ENCODE measurements at regions of chr3 and their contacts with region 1.

Region 1: GRCh38 chr3:59424268-59425010 is 374.6 kb upstream of the CFAP20DC start:
- DNase-seq: peak in 5 of 9 donors; percentile 20 to 72 (median 50)
- ATAC-seq: peak; percentile 76
- H3K4me3 ChIP-seq: no peak overlapping the region
- H3K4me3 Mint-ChIP-seq: peak overlapping the region; percentile 25 to 63 (median 34)
- H3K27ac ChIP-seq: no peak overlapping the region
- H3K27ac Mint-ChIP-seq: peak overlapping the region; percentile 44 to 92 (median 76)
- H3K4me1 ChIP-seq: peaks cover 46 to 50% of the 10 kb centered on the region in 2 donors
- H3K4me1 Mint-ChIP-seq: peaks cover 36 to 59% (median 52%) of the 10 kb centered on the region in 7 donors
- H3K27me3 ChIP-seq: no peaks in the 10 kb centered on the region
- H3K27me3 Mint-ChIP-seq: no peaks in the 10 kb centered on the region

Region 2: GRCh38 chr3:58792921-58793451 is 631.5 kb before region 1 on chr3:
- CTCF ChIA-PET with region 1: no interaction called
- POLR2A ChIA-PET with region 1: no interaction called
- intact Hi-C with region 1: no loop called
- DNase-seq: no peak
- ATAC-seq: no peak
- H3K4me3 ChIP-seq: no peak overlapping the region
- H3K4me3 Mint-ChIP-seq: no peak overlapping the region
- H3K27ac ChIP-seq: no peak overlapping the region
- H3K27ac Mint-ChIP-seq: no peak overlapping the region
- H3K4me1 ChIP-seq: no peaks in the 10 kb centered on the region
- H3K4me1 Mint-ChIP-seq: peaks cover 0 to under 1% (median 0%) of the 10 kb centered on the region in 7 donors
- H3K27me3 ChIP-seq: no peaks in the 10 kb centered on the region
- H3K27me3 Mint-ChIP-seq: peaks cover 0 to 18% (median 7%) of the 10 kb centered on the region in 5 donors

Region 3: DNA sequence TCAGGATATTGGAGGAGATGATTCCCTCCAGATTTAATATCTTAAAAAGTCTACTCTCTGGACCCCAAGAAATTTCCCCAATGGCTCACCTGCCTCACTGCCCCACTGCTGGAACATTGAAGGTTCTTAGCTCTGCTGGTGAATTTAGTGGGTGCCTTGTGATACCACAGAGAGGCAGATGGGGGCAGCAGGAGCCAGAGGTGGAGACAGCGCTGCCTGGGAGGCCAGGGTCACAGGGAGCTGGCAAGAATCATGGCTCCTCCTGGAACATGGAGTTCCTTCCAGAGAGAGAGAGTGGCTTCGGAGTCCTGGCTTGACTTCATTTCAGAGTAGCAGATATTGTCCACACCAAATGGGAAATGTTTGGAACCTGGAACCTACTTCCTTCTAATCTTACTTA is 111.1 kb before region 1 on chr3:
- CTCF ChIA-PET with region 1: no interaction called
- POLR2A ChIA-PET with region 1: no interaction called
- intact Hi-C with region 1: loop called in 1 of 2 experiments (anchors 2 kb)
- DNase-seq: peak in 7 of 9 donors; percentile 3 to 47 (median 15)
- ATAC-seq: peak; percentile 59
- H3K4me3 ChIP-seq: no peak overlapping the region
- H3K4me3 Mint-ChIP-seq: no peak overlapping the region
- H3K27ac ChIP-seq: no peak overlapping the region
- H3K27ac Mint-ChIP-seq: peak overlapping the region in 1 of 9 donors; percentile 80
- H3K4me1 ChIP-seq: no peaks in the 10 kb centered on the region
- H3K4me1 Mint-ChIP-seq: peaks cover 0 to 9% (median 3%) of the 10 kb centered on the region in 7 donors
- H3K27me3 ChIP-seq: no peaks in the 10 kb centered on the region
- H3K27me3 Mint-ChIP-seq: peaks cover 0 to 7% (median 0%) of the 10 kb centered on the region in 5 donors

Region 4: GRCh38 chr3:59386165-59386564 is 38.3 kb before region 1 on chr3:
- CTCF ChIA-PET with region 1: no interaction called
- POLR2A ChIA-PET with region 1: no interaction called
- intact Hi-C with region 1: loop called (anchors 2 to 5 kb)
- DNase-seq: no peak
- ATAC-seq: peak; percentile 60
- H3K4me3 ChIP-seq: no peak overlapping the region
- H3K4me3 Mint-ChIP-seq: peak overlapping the region in 2 of 10 donors; percentile 4 to 58
- H3K27ac ChIP-seq: no peak overlapping the region
- H3K27ac Mint-ChIP-seq: peak overlapping the region in 1 of 9 donors; percentile 88
- H3K4me1 ChIP-seq: no peaks in the 10 kb centered on the region
- H3K4me1 Mint-ChIP-seq: peaks cover 3 to 80% (median 38%) of the 10 kb centered on the region in 7 donors
- H3K27me3 ChIP-seq: no peaks in the 10 kb centered on the region
- H3K27me3 Mint-ChIP-seq: no peaks in the 10 kb centered on the region

Region 5: DNA sequence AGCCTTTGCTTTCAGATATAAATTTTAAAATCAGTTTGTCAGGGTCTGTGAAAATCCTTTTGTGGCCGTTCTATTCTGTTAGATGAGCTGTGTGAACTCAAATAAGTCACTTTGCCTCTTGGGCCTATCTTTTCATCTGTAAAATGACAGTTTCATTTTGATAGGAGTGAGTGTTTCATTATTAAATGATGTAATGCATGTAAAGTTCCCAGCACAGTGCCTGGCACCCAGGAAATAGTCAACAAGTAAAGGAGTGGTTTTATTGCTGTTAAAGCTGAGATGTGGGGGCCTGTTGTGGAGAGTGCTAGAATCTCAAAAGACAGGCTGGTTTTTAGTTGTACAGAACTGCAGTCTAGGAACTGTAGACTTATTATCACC is 19.8 kb after region 1 on chr3:
- CTCF ChIA-PET with region 1: interaction called, 10 read pairs
- POLR2A ChIA-PET with region 1: interaction called, 6 read pairs
- intact Hi-C with region 1: no loop called
- DNase-seq: peak in 6 of 9 donors; percentile 8 to 41 (median 22)
- ATAC-seq: peak; percentile 72
- H3K4me3 ChIP-seq: peak overlapping the region; percentile 51
- H3K4me3 Mint-ChIP-seq: peak overlapping the region; percentile 1 to 85 (median 78)
- H3K27ac ChIP-seq: peak overlapping the region; percentile 73
- H3K27ac Mint-ChIP-seq: peak overlapping the region; percentile 88 to 98 (median 95)
- H3K4me1 ChIP-seq: peaks cover 15 to 53% of the 10 kb centered on the region in 2 donors
- H3K4me1 Mint-ChIP-seq: peaks cover 31 to 97% (median 67%) of the 10 kb centered on the region in 7 donors
- H3K27me3 ChIP-seq: no peaks in the 10 kb centered on the region
- H3K27me3 Mint-ChIP-seq: no peaks in the 10 kb centered on the region